ENCODE measurements at regions of chr10 and their contacts with region 1.

Region 1: DNA sequence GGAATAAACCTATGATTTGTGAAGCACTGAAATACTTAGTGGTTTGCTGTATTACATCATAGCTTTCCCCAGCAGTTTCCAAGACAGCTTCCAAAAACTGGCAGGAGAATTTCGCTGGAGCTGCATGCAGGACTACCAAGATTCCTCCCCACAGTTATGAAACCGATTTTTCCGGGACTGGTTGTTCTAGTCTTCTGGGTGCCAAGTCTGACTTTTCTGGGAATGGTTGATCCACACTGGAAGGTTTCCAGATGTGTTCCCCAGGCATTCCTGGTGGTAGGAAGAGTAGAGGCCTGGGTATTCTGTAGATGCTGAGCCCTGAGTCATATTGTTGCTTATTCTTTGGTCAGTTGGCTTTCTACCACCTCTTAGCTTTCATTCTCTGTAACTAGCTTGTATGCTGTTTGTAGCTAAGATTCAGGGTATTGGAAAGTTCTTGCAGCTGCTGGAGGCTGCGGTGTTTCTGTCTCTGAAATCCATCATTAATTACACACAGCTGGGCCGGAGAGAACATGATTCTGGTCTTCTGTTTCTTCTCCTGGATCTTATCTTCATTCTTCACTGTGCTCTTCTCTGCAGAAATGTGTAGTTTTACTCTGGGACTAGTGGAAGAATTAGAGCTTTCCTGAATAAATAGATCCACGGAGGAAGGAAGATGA is 6.3 kb downstream of the ABCC2 start:
- DNase-seq: peak; percentile 84
- H3K4me3 ChIP-seq: no peak overlapping the region; the same call in none of the 2 replicates
- CTCF ChIP-seq: no peak

Region 2: GRCh38 chr10:99714446-99714845 is 74.3 kb before region 1 on chr10:
- CTCF ChIA-PET with region 1: no interaction called
- POLR2A ChIA-PET with region 1: no interaction called
- DNase-seq: no peak
- H3K4me3 ChIP-seq: no peak overlapping the region
- CTCF ChIP-seq: no peak

Region 3: GRCh38 chr10:99799613-99800012 is 10.9 kb after region 1 on chr10:
- CTCF ChIA-PET with region 1: interaction called, 10 read pairs
- POLR2A ChIA-PET with region 1: no interaction called
- DNase-seq: no peak
- H3K4me3 ChIP-seq: no peak overlapping the region
- CTCF ChIP-seq: no peak

Measured in AG04449 (cell line).